Common myeloid progenitor, CD34-positive (primary cell): ENCODE measurements at regions of chr10 and their contacts with region 1.

Region 1: DNA sequence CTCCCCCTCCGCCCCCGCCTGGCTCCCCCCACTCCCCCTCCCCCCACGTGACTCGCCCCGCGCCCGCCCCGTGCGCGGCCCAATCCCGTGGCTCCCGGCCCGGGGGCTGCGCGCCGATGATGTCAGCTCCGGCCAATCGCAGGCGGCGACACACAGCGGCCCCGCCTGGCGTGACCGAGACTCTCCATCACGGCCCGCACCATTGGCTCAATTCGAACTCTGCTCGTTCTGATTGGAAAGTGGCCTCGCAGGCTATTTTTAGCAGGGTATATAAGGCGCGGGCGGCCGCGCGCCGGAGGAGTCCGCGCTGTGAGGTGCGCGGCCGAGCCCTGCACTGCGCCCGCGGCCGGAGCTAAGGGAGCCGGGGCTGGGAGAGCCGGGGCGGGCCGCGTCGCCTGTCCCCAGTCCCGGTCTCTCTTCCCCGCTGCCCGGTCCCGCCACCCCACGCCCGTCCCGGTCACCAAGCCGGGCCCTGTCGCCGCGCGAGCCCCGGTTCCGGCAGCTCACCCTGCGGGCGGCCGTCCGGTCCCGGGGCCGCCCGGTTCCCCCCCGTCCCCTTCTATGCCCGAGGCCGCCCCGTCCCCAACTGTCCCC is 345 bp upstream of the KLF6 start:
- DNase-seq: peak; percentile 97 to 99 (median 99)
- H3K4me3 ChIP-seq: peak overlapping the region; percentile 95 to 100 (median 97)
- H3K27ac ChIP-seq: peak overlapping the region; percentile 95 to 99
- H3K4me1 ChIP-seq: peaks cover 10 to 36% (median 34%) of the 10 kb centered on the region in 4 experiments
- H3K27me3 ChIP-seq: no peaks in the 10 kb centered on the region

Region 2: DNA sequence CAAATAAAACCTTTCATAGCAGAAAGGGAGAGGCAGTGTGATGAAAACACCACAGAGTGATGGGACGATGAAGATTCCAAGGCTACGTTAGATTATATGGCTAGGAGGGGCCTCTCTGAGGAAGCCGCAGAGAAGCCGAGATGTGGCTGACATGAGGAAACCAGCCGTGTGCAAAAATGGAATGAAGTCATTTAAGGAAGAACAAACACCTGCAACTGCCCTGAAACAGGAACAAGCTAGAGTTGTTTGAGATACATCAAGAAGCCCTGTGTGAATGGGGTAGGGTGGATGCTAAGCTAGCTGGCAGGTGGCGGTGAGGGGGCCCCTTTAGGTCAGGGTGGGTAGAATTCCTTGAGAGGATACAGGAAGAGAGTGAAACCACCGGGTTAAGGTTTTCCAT is 129.8 kb before region 1 on chr10:
- CTCF ChIA-PET with region 1: no interaction called
- POLR2A ChIA-PET with region 1: no interaction called
- DNase-seq: peak; percentile 43 to 89 (median 75)
- H3K4me3 ChIP-seq: peak overlapping the region in 3 of 7 experiments; percentile 26 to 46 (median 35)
- H3K27ac ChIP-seq: no peak overlapping the region
- H3K4me1 ChIP-seq: peaks cover 6 to 19% (median 11%) of the 10 kb centered on the region in 4 experiments
- H3K27me3 ChIP-seq: no peaks in the 10 kb centered on the region

Region 3: GRCh38 chr10:3805791-3806461 is 20.6 kb after region 1 on chr10:
- CTCF ChIA-PET with region 1: no interaction called
- POLR2A ChIA-PET with region 1: interaction called, 48 read pairs
- DNase-seq: peak; percentile 77 to 94 (median 93)
- H3K4me3 ChIP-seq: peak overlapping the region in 4 of 7 experiments; percentile 15 to 57 (median 20)
- H3K27ac ChIP-seq: peak overlapping the region; percentile 99
- H3K4me1 ChIP-seq: peaks cover 34 to 86% (median 82%) of the 10 kb centered on the region in 4 experiments
- H3K27me3 ChIP-seq: no peaks in the 10 kb centered on the region

Region 4: GRCh38 chr10:3873728-3874461 is 88.5 kb after region 1 on chr10:
- CTCF ChIA-PET with region 1: interaction called, 4 read pairs
- POLR2A ChIA-PET with region 1: interaction called, 20 read pairs
- DNase-seq: peak; percentile 96 to 98 (median 98)
- H3K4me3 ChIP-seq: peak overlapping the region in 1 of 7 experiments; percentile 2
- H3K27ac ChIP-seq: peak overlapping the region; percentile 99 to 100
- H3K4me1 ChIP-seq: peaks cover 8 to 52% (median 42%) of the 10 kb centered on the region in 4 experiments
- H3K27me3 ChIP-seq: no peaks in the 10 kb centered on the region

Region 5: DNA sequence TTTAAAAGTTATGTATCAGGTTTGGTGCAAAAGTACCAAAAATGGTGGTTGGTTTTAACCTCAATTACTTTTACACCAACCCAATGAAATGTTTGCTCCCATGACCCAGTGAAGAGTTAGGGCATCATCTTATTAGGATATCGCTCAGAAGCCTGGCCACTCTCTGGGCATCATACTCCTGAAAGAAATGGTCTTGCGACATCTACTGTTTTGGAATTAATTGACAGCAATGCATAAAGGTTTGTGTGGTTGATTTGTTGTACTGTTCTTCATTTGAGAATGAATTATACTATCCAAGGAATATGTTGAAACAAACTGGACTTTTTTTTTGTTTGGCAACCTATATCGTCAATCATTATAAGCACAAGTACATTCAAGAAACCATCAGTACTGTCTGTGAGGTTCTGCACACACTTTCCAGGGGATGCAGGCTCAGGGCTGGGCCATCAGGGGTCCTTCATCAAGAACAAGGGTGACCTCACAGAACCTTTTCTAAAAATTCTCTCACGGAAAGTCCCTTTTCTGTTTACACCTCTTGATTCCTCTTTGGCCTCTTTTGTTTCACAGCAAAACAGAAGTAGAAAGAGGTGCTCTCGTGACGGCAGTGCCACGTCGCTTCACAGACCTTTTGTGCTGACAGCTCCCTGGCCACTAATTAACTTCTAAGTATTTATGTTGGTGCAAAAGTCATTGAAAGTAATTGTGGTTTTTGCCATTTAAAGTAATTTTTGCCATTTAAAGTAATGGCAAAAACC is 116.9 kb after region 1 on chr10:
- CTCF ChIA-PET with region 1: no interaction called
- POLR2A ChIA-PET with region 1: interaction called, 12 read pairs
- DNase-seq: peak; percentile 50 to 89 (median 89)
- H3K4me3 ChIP-seq: no peak overlapping the region
- H3K27ac ChIP-seq: peak overlapping the region; percentile 5 to 16
- H3K4me1 ChIP-seq: peaks cover 0 to 16% (median 5%) of the 10 kb centered on the region in 4 experiments
- H3K27me3 ChIP-seq: no peaks in the 10 kb centered on the region

Region 6: GRCh38 chr10:3914733-3915132 is 129.4 kb after region 1 on chr10:
- CTCF ChIA-PET with region 1: no interaction called
- POLR2A ChIA-PET with region 1: no interaction called
- DNase-seq: no peak
- H3K4me3 ChIP-seq: no peak overlapping the region
- H3K27ac ChIP-seq: no peak overlapping the region
- H3K4me1 ChIP-seq: no peaks in the 10 kb centered on the region
- H3K27me3 ChIP-seq: no peaks in the 10 kb centered on the region

Region 7: DNA sequence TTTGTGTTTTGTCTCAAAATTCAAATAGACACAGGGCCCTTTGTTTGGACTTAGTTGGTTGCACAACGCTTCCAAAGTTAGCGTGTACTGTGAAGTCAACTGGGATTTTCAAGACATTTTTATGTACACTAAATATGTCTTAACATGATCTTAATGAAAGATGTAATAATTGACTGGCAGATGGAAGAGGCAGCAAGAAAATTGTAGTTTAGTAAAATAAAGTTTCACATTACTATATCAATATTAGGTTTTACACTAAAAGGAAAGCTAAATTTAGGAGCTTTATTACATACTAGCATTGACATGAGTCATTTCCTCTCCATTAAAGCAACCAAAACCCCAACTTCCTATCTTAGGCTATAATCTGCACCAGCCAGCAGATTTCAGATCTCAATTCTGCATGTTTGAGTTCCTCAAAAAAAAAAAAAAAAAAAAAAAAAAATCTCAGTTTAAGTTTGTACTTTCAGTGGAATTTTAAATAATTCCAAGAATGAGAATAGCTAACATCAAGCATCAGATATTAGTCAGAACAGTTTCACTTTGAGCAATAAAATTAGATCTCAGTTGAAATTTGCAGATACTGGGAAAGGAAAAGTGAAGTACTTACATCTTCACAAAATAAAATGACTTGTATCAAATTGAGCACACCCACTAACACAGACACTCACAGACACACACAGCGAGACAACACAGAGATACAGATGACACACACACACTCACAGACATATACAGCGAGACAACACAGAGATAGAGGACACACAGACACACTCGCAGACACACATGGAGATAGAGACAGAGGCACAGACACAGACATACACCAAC is 346.3 kb after region 1 on chr10:
- CTCF ChIA-PET with region 1: no interaction called
- POLR2A ChIA-PET with region 1: interaction called, 15 read pairs
- DNase-seq: peak; percentile 92 to 97 (median 96)
- H3K4me3 ChIP-seq: peak overlapping the region in 6 of 7 experiments; percentile 8 to 61 (median 54)
- H3K27ac ChIP-seq: peak overlapping the region; percentile 67 to 81
- H3K4me1 ChIP-seq: peaks cover 34 to 60% (median 43%) of the 10 kb centered on the region in 4 experiments
- H3K27me3 ChIP-seq: peaks cover 0 to 5% (median 2%) of the 10 kb centered on the region in 5 experiments